ENCODE measurements at regions of chr2 and their contacts with region 1.

Region 1: DNA sequence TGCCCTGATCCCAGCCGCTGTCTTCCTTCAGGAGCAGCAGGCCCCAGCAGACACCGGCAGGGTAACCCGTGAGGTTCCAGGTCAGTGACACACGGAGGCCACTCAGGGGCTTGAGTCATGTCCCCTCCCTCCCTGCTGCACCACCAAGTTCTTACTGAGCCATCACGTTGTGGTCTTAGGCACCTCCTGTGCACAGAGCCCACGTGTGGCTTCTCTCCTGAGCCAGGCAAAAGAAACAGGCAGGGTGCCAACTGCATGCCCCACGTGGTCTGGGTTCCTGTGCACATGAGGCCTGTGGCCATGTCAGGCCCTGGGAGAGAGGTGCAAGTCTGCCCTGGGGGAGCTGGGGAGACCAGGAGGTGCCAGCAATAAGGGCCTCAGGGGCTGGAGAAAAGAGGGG is 264.8 kb downstream of the KLHL29 start:
- DNase-seq: no peak
- ATAC-seq: no peak
- H3K4me3 ChIP-seq: no peak overlapping the region
- H3K27ac ChIP-seq: no peak overlapping the region
- H3K4me1 ChIP-seq: no peaks in the 10 kb centered on the region
- H3K27me3 ChIP-seq: no peaks in the 10 kb centered on the region
- CTCF ChIP-seq: no peak
- POLR2A ChIP-seq: no peak

Region 2: DNA sequence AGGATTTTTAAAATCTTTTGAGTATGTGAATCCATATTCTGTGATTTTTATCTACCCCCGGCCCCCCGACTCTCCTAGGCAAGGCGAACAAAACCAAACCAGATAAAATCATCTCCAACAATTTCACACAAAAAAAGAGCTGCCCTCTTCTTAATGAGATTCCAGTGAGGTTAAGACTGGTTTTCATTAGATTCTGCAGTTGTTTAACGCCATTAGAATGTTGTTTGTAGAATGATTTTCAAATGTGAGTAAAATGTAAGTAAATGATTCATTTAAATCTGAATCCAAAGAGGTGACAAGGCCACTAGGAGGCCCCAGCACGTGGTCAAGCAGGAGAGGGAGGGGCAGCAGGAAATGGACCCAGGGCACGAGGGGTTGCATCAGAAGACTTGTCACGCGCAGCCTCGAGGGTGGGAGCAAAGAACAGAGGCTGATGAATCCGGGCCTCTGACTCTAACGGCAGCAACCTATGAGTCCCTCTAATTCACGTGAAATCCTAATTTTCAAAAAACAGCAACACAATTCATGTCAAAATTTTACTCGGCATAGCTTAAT is 289.2 kb before region 1 on chr2:
- in situ Hi-C with region 1: no loop called
- intact Hi-C with region 1: loop called (anchors 10 kb)
- DNase-seq: no peak
- ATAC-seq: no peak
- H3K4me3 ChIP-seq: no peak overlapping the region
- H3K27ac ChIP-seq: no peak overlapping the region
- H3K4me1 ChIP-seq: no peaks in the 10 kb centered on the region
- H3K27me3 ChIP-seq: no peaks in the 10 kb centered on the region
- CTCF ChIP-seq: no peak
- POLR2A ChIP-seq: no peak